Heart right ventricle (tissue), 16 donors: ENCODE measurements at regions of chr20 and their contacts with region 1.

Region 1: GRCh38 chr20:49330544-49331239 is 52.8 kb upstream of the ZNFX1 start:
- DNase-seq: no peak
- ATAC-seq: no peak
- H3K4me3 ChIP-seq: no peak overlapping the region
- H3K27ac ChIP-seq: no peak overlapping the region
- H3K4me1 ChIP-seq: no peaks in the 10 kb centered on the region
- H3K27me3 ChIP-seq: peaks cover 0 to 60% (median 38%) of the 10 kb centered on the region in 7 donors
- CTCF ChIP-seq: no peak

Region 2: GRCh38 chr20:49268600-49269365 is 61.9 kb before region 1 on chr20:
- intact Hi-C with region 1: no loop called
- DNase-seq: no peak
- ATAC-seq: no peak
- H3K4me3 ChIP-seq: peak overlapping the region in 5 of 10 donors; percentile 2 to 24 (median 16)
- H3K27ac ChIP-seq: no peak overlapping the region
- H3K4me1 ChIP-seq: peaks cover 0 to 85% (median 66%) of the 10 kb centered on the region in 9 donors
- H3K27me3 ChIP-seq: no peaks in the 10 kb centered on the region
- CTCF ChIP-seq: no peak

Region 3: DNA sequence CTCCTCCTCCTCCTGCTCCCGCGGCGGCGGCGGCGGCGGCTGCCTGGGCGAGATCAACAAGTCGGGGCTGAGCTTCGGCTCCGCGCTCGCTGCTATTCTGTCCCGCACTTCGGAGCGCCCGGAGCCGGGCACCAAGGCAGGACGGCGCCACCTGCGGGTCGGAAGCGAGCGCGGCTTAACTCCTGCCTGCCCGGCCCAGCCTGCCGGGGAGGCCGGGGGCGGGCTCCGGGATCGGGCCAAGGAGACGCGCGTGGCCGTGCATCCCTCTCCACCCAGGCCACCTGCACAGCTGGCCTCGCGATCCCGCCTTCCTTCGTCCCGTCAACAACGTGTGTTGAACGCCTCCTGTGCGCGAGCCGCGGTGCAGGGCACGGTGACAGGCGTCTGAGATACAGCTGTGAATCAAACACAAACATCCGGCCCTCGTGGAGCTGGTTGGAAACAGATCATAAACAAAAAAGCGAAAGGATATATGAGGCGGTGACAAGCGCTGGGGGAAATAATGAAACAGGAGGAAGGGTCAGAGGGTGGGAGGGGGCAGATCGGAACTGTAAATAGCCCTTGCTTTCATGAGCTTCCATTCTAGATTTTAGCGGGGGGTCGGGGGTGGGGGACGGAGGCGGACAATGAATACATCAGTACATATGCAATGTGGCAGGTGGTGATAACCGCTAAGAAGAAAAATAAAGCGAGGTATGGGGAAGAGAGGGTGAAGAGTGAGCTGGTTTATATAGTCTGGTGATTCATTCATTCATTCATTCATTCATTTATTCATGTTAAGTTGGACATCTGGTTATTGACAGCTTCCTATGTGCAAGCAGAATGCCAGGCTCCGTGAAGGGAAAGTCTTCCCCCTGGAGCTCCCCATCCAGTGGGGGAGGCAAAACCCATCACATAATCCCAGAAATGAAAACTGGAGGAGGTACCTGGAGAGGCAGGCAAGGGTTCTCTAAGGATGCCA is 153.8 kb after region 1 on chr20:
- intact Hi-C with region 1: loop called (anchors 1 to 5 kb)
- DNase-seq: peak; percentile 71 to 82
- ATAC-seq: peak; percentile 88 to 94 (median 92)
- H3K4me3 ChIP-seq: peak overlapping the region in 9 of 10 donors; percentile 42 to 62 (median 54)
- H3K27ac ChIP-seq: no peak overlapping the region
- H3K4me1 ChIP-seq: peaks cover 3 to 25% (median 14%) of the 10 kb centered on the region in 9 donors
- H3K27me3 ChIP-seq: peaks cover 0 to 76% (median 26%) of the 10 kb centered on the region in 7 donors
- CTCF ChIP-seq: peak; percentile 62 to 94 (median 80)

Region 4: GRCh38 chr20:49508435-49509199 is 177.9 kb after region 1 on chr20:
- intact Hi-C with region 1: loop called in 6 of 10 experiments (anchors 1 to 5 kb)
- DNase-seq: no peak
- ATAC-seq: peak in 3 of 8 donors; percentile 2 to 34 (median 20)
- H3K4me3 ChIP-seq: no peak overlapping the region
- H3K27ac ChIP-seq: no peak overlapping the region
- H3K4me1 ChIP-seq: peaks cover 0 to 25% (median 8%) of the 10 kb centered on the region in 9 donors
- H3K27me3 ChIP-seq: peaks cover 0 to 15% (median 7%) of the 10 kb centered on the region in 7 donors
- CTCF ChIP-seq: peak in 8 of 9 donors; percentile 37 to 69 (median 59)

Region 5: GRCh38 chr20:49534255-49534712 is 203.6 kb after region 1 on chr20:
- intact Hi-C with region 1: loop called (anchors 1 to 5 kb)
- DNase-seq: peak in 1 of 2 donors; percentile 57
- ATAC-seq: peak in 7 of 8 donors; percentile 65 to 79 (median 70)
- H3K4me3 ChIP-seq: no peak overlapping the region
- H3K27ac ChIP-seq: no peak overlapping the region
- H3K4me1 ChIP-seq: peaks cover 0 to 8% (median 0%) of the 10 kb centered on the region in 9 donors
- H3K27me3 ChIP-seq: no peaks in the 10 kb centered on the region
- CTCF ChIP-seq: peak; percentile 54 to 90 (median 83)